A673 (cell line): ENCODE measurements at regions of chr22 and their contacts with region 1.

Region 1: DNA sequence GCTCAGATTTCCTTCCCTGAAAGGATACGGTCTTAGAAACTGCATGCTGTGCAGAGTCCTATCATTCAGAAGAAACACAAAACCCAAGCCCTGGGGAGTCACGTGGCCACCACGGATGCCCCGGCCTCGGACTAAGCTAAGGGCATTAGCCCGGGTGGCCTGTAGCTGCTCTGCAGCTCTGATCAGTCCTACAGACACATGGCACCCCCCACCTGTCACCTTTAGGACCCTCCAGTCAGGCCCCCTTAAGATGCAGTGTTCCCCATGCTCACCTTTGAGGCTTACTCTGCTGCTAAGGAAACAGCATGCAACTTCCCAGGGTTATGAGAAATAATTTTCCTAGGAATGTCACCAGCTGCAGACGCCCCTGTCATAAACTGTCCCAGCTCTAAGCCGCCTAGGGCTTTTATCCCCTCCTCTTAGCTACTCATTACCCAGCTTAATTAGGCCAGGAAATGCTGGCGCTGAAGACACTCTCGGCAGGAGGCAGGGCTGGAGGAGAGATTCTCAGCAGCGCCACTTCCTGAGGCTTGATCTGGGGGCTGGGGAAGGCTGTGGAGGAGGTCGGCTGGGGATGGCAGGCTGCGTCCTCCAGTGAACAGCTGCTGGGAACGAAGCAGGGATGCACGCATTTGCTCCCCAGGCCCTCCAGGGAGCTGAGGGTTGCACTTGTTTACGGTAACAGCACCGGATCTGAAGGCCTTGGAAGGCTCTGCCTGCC is 47.2 kb upstream of the ADA2 start:
- DNase-seq: peak; percentile 98
- H3K4me3 ChIP-seq: peak overlapping the region; percentile 10
- H3K27ac ChIP-seq: peak overlapping the region; percentile 94
- H3K4me1 ChIP-seq: peaks cover 63% of the 10 kb centered on the region
- H3K27me3 ChIP-seq: no peaks in the 10 kb centered on the region
- CTCF ChIP-seq: 0 out of 2 replicates have a peak, but pooled peaks have one; percentile 13

Region 2: DNA sequence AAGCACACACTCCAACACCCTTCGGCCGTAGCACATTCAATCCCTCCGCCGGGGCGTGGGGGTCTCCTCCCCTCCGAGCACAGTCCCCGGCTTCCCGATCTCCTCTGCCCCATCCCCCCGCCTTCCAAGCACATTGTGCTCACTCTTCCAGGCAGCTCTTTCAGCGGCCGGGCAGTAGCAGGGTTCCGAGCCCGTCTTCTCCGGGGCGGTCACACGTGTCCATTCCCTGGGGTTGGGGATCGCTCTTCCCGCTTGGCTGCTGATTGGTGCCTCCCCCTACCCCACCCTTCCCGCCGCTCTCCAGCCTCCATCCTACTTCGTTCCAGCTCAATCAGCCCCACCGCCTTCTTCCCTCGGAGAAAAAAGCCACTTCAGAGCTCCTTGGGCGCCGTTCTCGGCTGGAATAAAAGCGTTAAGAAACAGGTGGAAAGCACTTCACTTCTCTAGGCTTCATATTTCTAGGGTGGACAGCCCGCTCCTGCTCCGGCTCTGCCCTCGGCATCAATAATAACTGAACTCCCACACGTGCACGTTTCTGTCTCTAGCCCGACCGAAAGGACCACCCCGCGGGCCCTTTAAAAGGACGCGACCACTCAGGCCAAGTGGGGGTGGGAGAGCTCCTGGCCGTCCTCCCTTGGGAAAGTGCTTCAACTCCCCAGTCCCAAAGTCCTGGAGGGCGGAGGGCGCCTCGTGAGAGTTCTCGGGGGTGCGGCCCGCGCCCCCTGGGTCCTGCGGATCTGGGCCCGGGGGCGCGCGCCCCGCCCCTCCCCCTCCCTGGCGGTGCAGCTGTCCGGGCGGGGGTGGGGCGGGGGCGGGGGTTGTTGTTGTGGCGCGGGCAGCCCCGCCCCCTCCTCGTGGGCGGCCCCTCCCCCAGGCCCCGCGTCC is 102.4 kb after region 1 on chr22:
- CTCF ChIA-PET with region 1: no interaction called
- POLR2A ChIA-PET with region 1: no interaction called
- intact Hi-C with region 1: loop called (anchors 5 kb)
- DNase-seq: peak; percentile 56
- H3K4me3 ChIP-seq: peak overlapping the region; percentile 50
- H3K27ac ChIP-seq: peak overlapping the region; percentile 41
- H3K4me1 ChIP-seq: peaks cover 7% of the 10 kb centered on the region
- H3K27me3 ChIP-seq: peaks cover 43% of the 10 kb centered on the region
- CTCF ChIP-seq: no peak